ENCODE measurements at regions of chrX and their contacts with region 1.

Region 1: GRCh38 chrX:12802741-12803140 is 11.5 kb downstream of the PRPS2 start:
- DNase-seq: no peak
- ATAC-seq: peak; percentile 60
- H3K4me3 Mint-ChIP-seq: peak overlapping the region; percentile 69
- H3K27ac Mint-ChIP-seq: peak overlapping the region; percentile 85
- H3K4me1 Mint-ChIP-seq: peaks cover 29% of the 10 kb centered on the region
- H3K27me3 Mint-ChIP-seq: no peaks in the 10 kb centered on the region

Region 2: GRCh38 chrX:12791257-12792228 is 11.2 kb before region 1 on chrX and contains the start of gene PRPS2:
- POLR2A ChIA-PET with region 1: interaction called, 29 read pairs
- DNase-seq: peak; percentile 74
- ATAC-seq: peak; percentile 87
- H3K4me3 Mint-ChIP-seq: peak within 1 kb of the TSS; percentile 82
- H3K27ac Mint-ChIP-seq: peak within 1 kb of the TSS; percentile 67
- H3K4me1 Mint-ChIP-seq: peaks cover 30% of the 10 kb centered on the region
- H3K27me3 Mint-ChIP-seq: peaks cover 2% of the 10 kb centered on the region
- total RNA-seq, gene PRPS2: 67.1 to 74.0 TPM

Measured in activated naive CD8-positive, alpha-beta T cell treated with anti-CD3 and anti-CD28 coated beads, Interleukin-2, amount 10 ng/mL, durations not matched to agents 7 days and 5 days (primary cell).